Lower leg skin (tissue), 4 donors: ENCODE measurements at regions of chr1 and their contacts with region 1.

Region 1: DNA sequence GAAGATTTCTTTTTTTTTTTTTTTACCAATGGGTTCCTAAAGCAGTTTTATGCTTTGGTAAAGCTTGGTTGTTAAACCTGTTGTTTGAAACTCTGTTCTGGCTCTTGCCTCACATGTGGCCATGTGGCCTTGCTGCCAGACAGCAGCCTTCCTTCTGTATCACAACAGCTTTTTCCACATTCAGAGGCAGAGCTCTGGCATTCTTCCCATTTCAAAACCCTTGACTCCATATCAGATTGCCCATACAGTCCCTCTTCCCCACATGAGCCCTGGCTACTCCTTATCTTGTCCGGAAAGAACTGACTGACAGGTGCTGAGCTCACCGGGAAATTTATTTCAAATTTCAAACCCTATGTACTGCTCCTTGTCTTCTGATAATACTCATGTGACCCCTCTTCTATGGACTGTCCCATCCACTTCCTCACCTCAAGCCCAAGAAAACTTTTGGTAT is 38.5 kb upstream of the LAX1 start:
- DNase-seq: no peak
- H3K4me3 ChIP-seq: no peak overlapping the region
- CTCF ChIP-seq: no peak
- POLR2A ChIP-seq: no peak

Region 2: GRCh38 chr1:204225841-204226735 is 499.6 kb after region 1 on chr1:
- intact Hi-C with region 1: no loop called
- DNase-seq: peak in 1 of 2 donors; percentile 82
- H3K4me3 ChIP-seq: no peak overlapping the region
- CTCF ChIP-seq: no peak
- POLR2A ChIP-seq: no peak

Region 3: DNA sequence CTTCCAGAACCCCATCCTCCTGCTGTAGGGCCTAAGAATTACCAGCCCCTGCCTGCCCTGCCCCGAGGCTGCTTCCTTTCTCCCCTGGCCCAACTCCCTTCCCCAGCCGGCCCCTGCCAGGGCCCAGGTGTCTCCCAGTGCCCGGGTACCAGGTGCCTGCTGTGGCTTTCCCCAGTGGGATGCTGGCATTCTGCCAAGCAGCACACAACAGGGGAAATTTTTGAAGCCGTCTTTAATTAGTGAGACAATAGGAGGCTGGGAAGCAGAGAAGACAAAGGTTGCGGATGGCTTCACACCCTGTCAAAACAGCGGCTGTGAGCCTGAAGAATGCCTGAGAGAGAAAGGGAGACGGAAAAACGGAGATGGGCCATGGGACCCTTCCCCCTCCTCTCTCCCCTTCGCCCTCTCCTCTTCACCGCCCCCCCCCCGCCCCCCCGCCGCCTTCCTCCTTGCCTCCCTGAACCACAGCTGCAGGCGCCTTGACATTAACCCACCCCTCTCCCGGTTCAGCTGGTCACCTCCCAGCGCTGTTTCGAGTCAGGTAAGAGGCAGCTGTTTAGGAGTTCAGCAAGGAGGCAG is 925.5 kb after region 1 on chr1:
- intact Hi-C with region 1: loop called (anchors 5 kb)
- DNase-seq: no peak
- H3K4me3 ChIP-seq: no peak overlapping the region
- CTCF ChIP-seq: no peak
- POLR2A ChIP-seq: no peak